AG04450 (cell line): ENCODE measurements at regions of chrX and their contacts with region 1.

Region 1: GRCh38 chrX:39820938-39821708 is 276.6 kb downstream of the BCOR start:
- DNase-seq: no peak
- H3K4me3 ChIP-seq: peak overlapping the region; percentile 44
- H3K27ac ChIP-seq: no peak overlapping the region
- H3K27me3 ChIP-seq: no peaks in the 10 kb centered on the region
- CTCF ChIP-seq: no peak

Region 2: GRCh38 chrX:39966176-39966575 is 145.1 kb after region 1 on chrX:
- CTCF ChIA-PET with region 1: interaction called, 10 read pairs
- POLR2A ChIA-PET with region 1: no interaction called
- DNase-seq: no peak
- H3K4me3 ChIP-seq: no peak overlapping the region
- H3K27ac ChIP-seq: no peak overlapping the region
- H3K27me3 ChIP-seq: peaks cover 4% of the 10 kb centered on the region
- CTCF ChIP-seq: no peak